MCF 10A (cell line): ENCODE measurements at regions of chrX and their contacts with region 1.

Region 1: GRCh38 chrX:36908801-36909676 is 99.1 kb upstream of the FAM47C start:
- DNase-seq: peak; percentile 53
- H3K4me3 Mint-ChIP-seq: no peak overlapping the region
- H3K27ac Mint-ChIP-seq: no peak overlapping the region
- H3K4me1 Mint-ChIP-seq: no peaks in the 10 kb centered on the region
- H3K27me3 Mint-ChIP-seq: peaks cover 11% of the 10 kb centered on the region
- CTCF ChIP-seq: peak; percentile 48

Region 2: DNA sequence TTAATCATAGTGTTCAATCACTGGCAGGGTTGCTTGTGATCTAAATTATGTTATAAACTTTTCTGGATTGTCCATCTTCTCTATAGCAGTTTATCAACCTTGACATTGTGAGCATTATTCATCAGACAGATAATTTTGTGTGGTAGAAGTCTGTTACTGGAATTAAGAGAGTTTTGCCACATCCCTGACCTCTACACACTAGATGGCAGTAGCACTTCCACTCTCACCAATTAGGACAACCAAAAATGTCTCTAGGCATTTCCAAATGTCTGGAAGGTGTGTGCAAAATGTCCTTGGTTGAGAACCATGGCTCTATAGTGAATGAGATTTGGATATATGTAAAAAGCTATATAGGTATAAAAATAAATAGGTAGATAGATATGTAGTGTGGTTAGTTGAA is 225.0 kb before region 1 on chrX:
- CTCF ChIA-PET with region 1: no interaction called
- POLR2A ChIA-PET with region 1: no interaction called
- intact Hi-C with region 1: no loop called
- DNase-seq: peak; percentile 30
- H3K4me3 Mint-ChIP-seq: no peak overlapping the region
- H3K27ac Mint-ChIP-seq: no peak overlapping the region
- H3K4me1 Mint-ChIP-seq: no peaks in the 10 kb centered on the region
- H3K27me3 Mint-ChIP-seq: peaks cover 46% of the 10 kb centered on the region
- CTCF ChIP-seq: no peak

Region 3: DNA sequence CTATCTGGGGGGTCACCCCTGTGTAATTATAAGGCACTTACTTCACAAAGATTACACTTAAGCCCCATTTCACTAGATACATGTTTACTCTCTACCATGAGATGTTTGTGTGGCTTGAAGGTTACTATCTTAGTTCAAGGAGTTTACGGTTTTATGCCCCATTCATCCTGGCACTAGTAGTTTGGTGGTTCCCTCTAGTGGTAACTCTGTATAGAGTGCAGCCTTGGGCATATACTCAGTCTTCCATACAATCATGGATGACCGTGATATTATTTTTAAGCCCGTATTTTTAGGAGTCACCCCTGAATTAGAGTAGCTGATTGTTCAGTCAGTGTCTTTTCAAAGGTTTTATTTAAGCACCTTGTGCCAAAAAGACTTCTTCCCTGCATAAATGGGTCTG is 10.7 kb before region 1 on chrX:
- CTCF ChIA-PET with region 1: interaction called, 10 read pairs
- POLR2A ChIA-PET with region 1: no interaction called
- intact Hi-C with region 1: no loop called
- DNase-seq: peak; percentile 28
- H3K4me3 Mint-ChIP-seq: no peak overlapping the region
- H3K27ac Mint-ChIP-seq: no peak overlapping the region
- H3K4me1 Mint-ChIP-seq: no peaks in the 10 kb centered on the region
- H3K27me3 Mint-ChIP-seq: peaks cover 30% of the 10 kb centered on the region
- CTCF ChIP-seq: peak; percentile 31

Region 4: GRCh38 chrX:37060999-37061398 is 152.0 kb after region 1 on chrX:
- CTCF ChIA-PET with region 1: interaction called, 3 read pairs
- POLR2A ChIA-PET with region 1: no interaction called
- intact Hi-C with region 1: loop called (anchors 2 kb)
- DNase-seq: peak; percentile 65
- H3K4me3 Mint-ChIP-seq: no peak overlapping the region
- H3K27ac Mint-ChIP-seq: no peak overlapping the region
- H3K4me1 Mint-ChIP-seq: no peaks in the 10 kb centered on the region
- H3K27me3 Mint-ChIP-seq: peaks cover 41% of the 10 kb centered on the region
- CTCF ChIP-seq: peak; percentile 46